ENCODE measurements at regions of chr9 and their contacts with region 1.

Region 1: DNA sequence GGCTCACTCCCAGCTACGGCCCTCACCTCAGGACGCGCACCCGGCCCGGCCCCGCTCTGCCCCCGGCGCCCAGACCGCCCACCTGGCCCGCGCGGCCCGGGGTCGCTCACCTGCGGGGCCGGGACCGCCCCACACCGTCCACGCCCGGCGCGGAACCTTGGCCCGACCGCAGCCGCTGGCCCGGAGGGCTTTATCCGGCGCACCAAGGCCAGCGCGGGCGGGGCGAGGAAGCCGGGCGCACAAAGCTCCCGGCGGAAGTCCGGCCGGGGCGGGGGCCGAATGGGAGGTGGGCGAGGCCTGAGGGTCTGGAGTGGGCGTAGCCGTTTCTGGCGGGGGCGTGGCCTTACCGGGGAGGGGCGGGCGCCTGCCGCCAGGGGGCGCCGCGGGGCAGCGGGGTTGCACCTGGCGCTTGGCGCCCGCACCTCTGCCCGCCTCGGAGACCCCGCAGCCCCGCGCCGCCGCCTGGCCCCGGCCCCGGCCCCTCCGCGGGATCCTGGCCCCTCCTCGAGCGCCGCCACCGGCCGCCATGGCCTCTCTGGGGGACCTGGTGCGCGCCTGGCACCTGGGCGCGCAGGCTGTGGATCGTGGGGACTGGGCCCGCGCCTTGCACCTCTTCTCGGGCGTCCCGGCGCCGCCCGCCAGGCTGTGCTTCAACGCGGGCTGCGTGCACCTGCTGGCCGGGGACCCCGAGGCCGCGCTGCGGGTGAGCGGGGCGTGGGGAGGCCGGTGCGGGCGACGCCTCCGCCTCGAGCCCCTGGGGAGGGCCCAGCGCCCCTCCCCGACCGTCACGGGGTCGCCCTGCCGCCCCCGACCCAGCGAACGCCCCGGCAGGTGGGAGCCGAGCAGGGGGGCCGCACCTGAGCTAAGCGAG is at the starts of genes EXD3 and NOXA1:
- DNase-seq: peak; percentile 86
- H3K4me3 ChIP-seq: peak within 1 kb of the TSS; percentile 69 to 76 (median 69)
- H3K27ac ChIP-seq: peak within 1 kb of the TSS; percentile 30
- H3K4me1 ChIP-seq: peaks cover 23% of the 10 kb centered on the region
- H3K27me3 ChIP-seq: no peaks in the 10 kb centered on the region
- CTCF ChIP-seq: peak; percentile 20 to 67
- total RNA-seq, gene EXD3: 9.1 to 10.8 TPM
- total RNA-seq, gene NOXA1: 0.82 to 2.0 TPM

Region 2: DNA sequence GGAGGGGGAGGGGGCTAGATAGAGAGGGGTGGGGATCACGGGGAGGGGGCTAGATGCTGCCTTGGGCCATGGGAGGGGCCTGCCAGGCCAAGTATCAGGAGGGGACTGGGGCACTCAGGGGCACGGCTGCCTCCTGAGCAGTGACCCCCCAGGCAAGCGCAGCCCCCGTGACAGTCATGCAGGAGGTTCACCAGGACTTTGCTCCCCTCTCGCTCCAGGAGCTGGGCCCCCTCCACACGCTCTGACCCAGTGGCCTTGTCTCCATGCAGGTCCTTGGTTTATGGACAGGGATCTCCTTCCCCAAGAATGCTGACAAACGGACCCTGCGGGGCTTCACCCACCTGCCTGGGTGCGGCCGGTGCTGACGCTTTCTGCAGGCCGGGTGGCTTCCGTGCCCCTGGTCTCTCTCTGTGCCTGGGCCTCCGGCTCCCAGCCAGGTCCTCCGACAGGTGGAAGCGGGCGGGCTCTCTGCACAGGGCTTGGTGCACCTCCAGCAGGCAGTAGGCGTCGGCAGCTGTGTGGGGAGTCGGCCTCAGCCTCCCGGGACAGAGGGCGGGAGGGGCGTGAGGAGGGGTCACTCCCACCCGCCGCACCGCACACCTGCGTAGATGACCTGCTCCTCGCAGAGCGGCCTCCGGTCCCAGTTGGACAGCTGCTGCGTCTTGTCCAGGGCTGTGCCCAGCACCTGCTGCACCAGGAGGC is 74.3 kb before region 1 on chr9:
- CTCF ChIA-PET with region 1: no interaction called
- dilution Hi-C with region 1: loop called (anchors 10 kb)
- in situ Hi-C with region 1: no loop called
- intact Hi-C with region 1: no loop called
- DNase-seq: no peak
- H3K4me3 ChIP-seq: no peak overlapping the region
- H3K27ac ChIP-seq: no peak overlapping the region
- H3K4me1 ChIP-seq: no peaks in the 10 kb centered on the region
- H3K27me3 ChIP-seq: no peaks in the 10 kb centered on the region
- CTCF ChIP-seq: no peak

Region 3: GRCh38 chr9:137396227-137396626 is 27.0 kb before region 1 on chr9:
- CTCF ChIA-PET with region 1: no interaction called
- dilution Hi-C with region 1: no loop called
- in situ Hi-C with region 1: no loop called
- intact Hi-C with region 1: no loop called
- DNase-seq: peak; percentile 17
- H3K4me3 ChIP-seq: no peak overlapping the region
- H3K27ac ChIP-seq: no peak overlapping the region
- H3K4me1 ChIP-seq: no peaks in the 10 kb centered on the region
- H3K27me3 ChIP-seq: no peaks in the 10 kb centered on the region
- CTCF ChIP-seq: no peak

Region 4: DNA sequence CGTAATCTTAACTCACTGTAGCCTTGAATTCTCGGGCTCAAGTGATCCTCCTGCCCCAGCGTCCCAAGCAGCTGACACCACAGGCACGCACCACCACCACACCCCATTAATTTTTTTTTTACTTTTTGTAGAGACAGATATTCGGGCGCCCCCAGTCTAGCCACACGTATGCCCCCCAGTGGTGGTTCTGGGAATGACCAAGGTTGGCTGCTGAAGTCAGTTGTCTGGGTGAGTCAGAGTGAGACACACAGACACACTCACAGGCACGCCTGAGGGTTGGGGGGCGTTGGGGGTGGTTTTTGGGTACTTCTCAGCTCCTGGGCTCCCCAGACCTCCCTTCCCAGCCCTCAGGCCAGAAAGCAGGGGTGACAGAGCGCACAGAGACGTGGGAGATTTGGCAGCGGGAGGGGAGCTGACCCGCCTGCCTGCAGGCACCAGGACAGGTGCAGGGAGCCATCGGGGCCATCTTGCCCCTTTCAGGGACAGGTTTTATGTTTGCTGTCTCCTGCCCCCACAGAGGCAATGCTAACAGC is 22.1 kb after region 1 on chr9:
- CTCF ChIA-PET with region 1: interaction called, 14 read pairs
- dilution Hi-C with region 1: no loop called
- in situ Hi-C with region 1: no loop called
- intact Hi-C with region 1: loop called (anchors 1 kb)
- DNase-seq: peak; percentile 81
- H3K4me3 ChIP-seq: no peak overlapping the region
- H3K27ac ChIP-seq: no peak overlapping the region
- H3K4me1 ChIP-seq: peaks cover 17% of the 10 kb centered on the region
- H3K27me3 ChIP-seq: no peaks in the 10 kb centered on the region
- CTCF ChIP-seq: peak; percentile 81 to 83

Region 5: GRCh38 chr9:137521405-137521985 is 98.3 kb after region 1 on chr9:
- CTCF ChIA-PET with region 1: no interaction called
- dilution Hi-C with region 1: no loop called
- in situ Hi-C with region 1: no loop called
- intact Hi-C with region 1: loop called (anchors 10 kb)
- DNase-seq: no peak
- H3K4me3 ChIP-seq: no peak overlapping the region
- H3K27ac ChIP-seq: no peak overlapping the region
- H3K4me1 ChIP-seq: no peaks in the 10 kb centered on the region
- H3K27me3 ChIP-seq: no peaks in the 10 kb centered on the region
- CTCF ChIP-seq: no peak

Measured in mammary epithelial cell (primary cell).